ENCODE measurements at regions of chr3 and their contacts with region 1.

Region 1: DNA sequence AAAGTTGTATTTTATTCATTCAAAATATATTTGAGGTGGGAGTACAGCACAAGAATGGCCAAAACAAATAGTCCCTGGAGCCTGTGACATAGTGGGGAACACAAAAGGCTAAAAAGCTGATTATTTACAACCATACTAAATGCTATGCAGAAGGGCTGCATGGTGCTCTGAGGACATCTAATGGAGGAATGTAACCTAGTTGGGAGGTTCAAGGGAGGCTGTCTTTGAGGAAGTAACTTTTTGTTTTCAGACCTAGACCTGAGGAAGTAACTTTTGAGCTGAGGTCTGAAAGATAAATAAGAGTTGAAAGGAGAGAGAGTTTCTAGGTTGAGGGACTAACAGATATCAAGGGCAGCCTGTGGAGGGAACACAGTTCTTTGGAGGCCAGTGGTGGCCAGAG is 34.8 kb upstream of the RASA2 start:
- DNase-seq: no peak
- H3K4me3 ChIP-seq: no peak overlapping the region
- H3K27ac ChIP-seq: peak overlapping the region; percentile 20 to 27
- H3K4me1 ChIP-seq: peaks cover 0 to 26% of the 10 kb centered on the region in 2 donors
- H3K27me3 ChIP-seq: no peaks in the 10 kb centered on the region
- CTCF ChIP-seq: peak; percentile 66 to 86 (median 73)

Region 2: DNA sequence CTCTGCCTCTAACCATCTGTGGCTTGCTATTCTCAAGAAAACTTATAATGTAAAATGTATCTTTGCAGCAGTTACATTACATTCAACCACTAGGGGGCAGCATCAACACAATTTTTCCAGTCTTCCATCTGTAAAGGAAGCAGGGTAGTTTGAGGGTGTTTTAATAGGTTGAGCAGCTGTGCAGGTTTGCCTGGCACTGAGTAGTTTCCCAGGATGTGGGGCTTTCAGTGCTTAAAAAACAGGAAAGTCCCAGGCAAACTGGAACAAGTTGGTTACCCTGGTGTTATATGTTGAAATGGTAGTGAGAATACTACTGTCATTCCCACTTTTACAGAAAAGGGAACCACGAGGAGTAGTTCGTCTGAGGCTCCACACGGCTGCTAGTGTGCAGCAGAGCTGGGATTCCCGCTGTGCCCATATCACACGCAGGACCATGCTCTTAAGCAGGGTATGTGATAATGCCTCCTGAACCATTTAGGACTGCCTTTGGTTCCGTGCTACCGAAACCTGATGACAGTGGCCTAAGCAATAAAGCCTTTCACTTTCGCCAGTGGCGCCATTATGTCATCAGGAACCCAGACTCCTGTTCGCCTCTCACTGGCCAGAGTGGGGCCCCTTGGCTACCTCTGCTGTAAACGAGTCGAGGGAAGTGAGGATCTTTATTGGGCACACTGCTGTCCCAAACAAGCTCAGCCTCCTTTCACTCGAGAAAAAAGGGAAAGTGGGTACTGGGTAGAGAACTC is 148.4 kb before region 1 on chr3:
- intact Hi-C with region 1: loop called (anchors 2 kb)
- DNase-seq: no peak
- H3K4me3 ChIP-seq: no peak overlapping the region
- H3K27ac ChIP-seq: no peak overlapping the region
- H3K4me1 ChIP-seq: no peaks in the 10 kb centered on the region
- H3K27me3 ChIP-seq: no peaks in the 10 kb centered on the region
- CTCF ChIP-seq: peak; percentile 65 to 79 (median 74)

Region 3: DNA sequence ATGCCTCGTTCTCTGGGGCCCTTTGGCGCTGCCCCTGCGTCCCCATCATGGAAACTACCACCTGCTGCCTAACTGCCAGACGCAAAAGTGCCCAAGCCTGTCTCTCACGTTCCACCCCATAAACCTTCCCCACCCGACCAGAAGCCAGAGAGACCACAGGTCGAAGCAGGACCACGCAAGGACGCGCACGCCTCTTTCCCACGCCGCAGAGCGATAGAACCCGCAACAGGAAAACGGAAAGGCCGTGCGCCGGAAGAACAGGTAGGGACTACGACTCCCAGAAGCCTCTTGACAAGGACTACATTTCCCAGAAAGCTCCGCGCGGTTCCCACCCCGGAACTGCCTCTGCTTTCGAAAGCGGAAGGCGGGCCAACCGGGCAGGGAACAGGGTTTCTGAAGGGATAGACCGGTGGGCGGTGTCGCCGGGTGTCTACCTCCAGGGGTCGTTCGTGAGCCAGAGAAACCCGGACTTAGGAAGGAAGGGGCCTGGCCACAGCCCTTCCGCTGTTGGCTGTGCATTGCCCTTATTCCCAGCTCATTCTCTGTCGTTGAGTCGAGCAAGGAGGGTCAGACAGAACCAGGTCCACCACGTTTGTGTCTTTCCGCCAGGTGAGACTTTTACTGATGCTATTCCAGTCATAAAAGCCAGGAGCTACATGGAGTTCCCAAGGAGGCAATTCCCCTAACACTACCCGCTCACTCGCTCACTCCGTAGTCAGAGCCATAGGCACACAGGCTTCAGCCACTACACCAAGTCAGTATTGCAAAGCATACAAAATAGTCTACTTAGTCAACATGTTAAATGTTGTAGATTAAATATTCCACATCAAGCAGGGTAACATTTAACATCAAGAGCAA is 140.3 kb before region 1 on chr3:
- intact Hi-C with region 1: loop called (anchors 1 kb)
- DNase-seq: peak; percentile 95 to 99
- H3K4me3 ChIP-seq: peak overlapping the region; percentile 59 to 89
- H3K27ac ChIP-seq: peak overlapping the region; percentile 63 to 82
- H3K4me1 ChIP-seq: peaks cover 0 to 8% of the 10 kb centered on the region in 2 donors
- H3K27me3 ChIP-seq: no peaks in the 10 kb centered on the region
- CTCF ChIP-seq: peak; percentile 72 to 85 (median 76)

Region 4: GRCh38 chr3:141402476-141403171 is 49.4 kb before region 1 on chr3:
- intact Hi-C with region 1: loop called (anchors 5 kb)
- DNase-seq: peak in 1 of 2 donors; percentile 81
- H3K4me3 ChIP-seq: peak overlapping the region; percentile 85 to 88
- H3K27ac ChIP-seq: peak overlapping the region; percentile 89 to 99
- H3K4me1 ChIP-seq: peaks cover 2 to 50% of the 10 kb centered on the region in 2 donors
- H3K27me3 ChIP-seq: no peaks in the 10 kb centered on the region
- CTCF ChIP-seq: peak in 1 of 3 experiments; percentile 7

Region 5: DNA sequence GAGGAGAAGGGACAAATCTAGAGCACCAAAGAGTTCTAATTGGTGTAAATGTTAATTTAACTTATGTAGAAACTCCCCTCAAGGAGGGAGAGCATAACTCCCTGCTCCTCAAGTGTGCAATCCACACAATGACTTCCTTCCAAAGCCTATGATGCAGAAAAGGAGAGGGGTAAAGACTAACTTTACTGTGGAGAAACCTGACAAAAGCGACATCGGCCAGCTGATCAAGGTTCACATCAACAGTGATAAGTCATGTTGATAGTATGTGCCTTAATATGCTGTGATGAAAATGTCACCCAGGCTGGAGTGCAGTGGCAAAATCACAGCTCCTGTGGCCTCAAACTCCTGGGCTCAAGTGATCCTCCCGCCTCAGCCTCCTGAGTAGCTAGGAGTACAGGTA is 620.8 kb after region 1 on chr3:
- intact Hi-C with region 1: no loop called
- DNase-seq: no peak
- H3K4me3 ChIP-seq: no peak overlapping the region
- H3K27ac ChIP-seq: no peak overlapping the region
- H3K4me1 ChIP-seq: no peaks in the 10 kb centered on the region
- H3K27me3 ChIP-seq: no peaks in the 10 kb centered on the region
- CTCF ChIP-seq: no peak

Region 6: GRCh38 chr3:142239421-142239820 is 787.4 kb after region 1 on chr3:
- intact Hi-C with region 1: no loop called
- DNase-seq: no peak
- H3K4me3 ChIP-seq: no peak overlapping the region
- H3K27ac ChIP-seq: no peak overlapping the region
- H3K4me1 ChIP-seq: no peaks in the 10 kb centered on the region
- H3K27me3 ChIP-seq: no peaks in the 10 kb centered on the region
- CTCF ChIP-seq: no peak